MCF 10A (cell line): ENCODE measurements at regions of chr3 and their contacts with region 1.

Region 1: DNA sequence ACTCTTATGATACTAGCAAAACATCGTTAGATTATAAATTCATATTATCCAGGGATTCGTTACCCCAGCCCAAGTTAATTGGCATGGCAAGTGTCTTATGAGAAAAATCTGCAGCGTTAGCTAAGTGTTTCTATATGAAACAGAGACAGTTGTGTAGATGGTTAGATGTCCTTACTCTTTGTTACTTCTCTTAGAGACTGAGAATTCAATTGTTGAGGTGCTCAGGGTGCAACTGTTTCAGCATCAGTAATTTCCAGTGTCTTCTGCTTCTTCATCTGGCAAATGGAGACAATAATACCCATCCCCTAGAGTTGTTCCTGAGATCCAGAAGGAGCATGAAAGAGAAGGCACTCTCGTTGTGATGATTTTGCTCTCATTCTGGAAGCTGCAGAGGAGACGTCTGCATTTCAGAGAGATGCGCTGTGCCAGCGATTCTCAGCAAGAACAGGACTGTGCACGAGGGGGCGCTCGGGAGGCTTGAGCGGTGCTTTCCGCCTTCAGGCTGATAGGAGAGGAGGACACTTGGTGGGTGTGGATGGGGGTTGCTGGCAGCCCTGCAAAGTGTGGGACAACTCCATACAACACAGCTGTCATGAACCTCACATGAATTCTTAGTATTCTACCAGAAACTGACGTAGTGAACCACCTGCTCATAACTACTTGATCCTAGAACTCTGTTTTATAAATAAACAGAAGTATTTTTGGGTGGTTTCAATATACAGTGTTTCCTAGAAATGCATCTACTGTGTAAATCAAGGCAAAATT is 39.7 kb upstream of the SPSB4 start:
- DNase-seq: peak; percentile 66
- H3K4me3 Mint-ChIP-seq: no peak overlapping the region
- H3K27ac Mint-ChIP-seq: no peak overlapping the region
- H3K4me1 Mint-ChIP-seq: no peaks in the 10 kb centered on the region
- H3K27me3 Mint-ChIP-seq: peaks cover 11% of the 10 kb centered on the region
- CTCF ChIP-seq: peak; percentile 84

Region 2: GRCh38 chr3:140898340-140899180 is 112.9 kb before region 1 on chr3:
- CTCF ChIA-PET with region 1: interaction called, 11 read pairs
- POLR2A ChIA-PET with region 1: no interaction called
- intact Hi-C with region 1: no loop called
- DNase-seq: peak; percentile 83
- H3K4me3 Mint-ChIP-seq: no peak overlapping the region
- H3K27ac Mint-ChIP-seq: no peak overlapping the region
- H3K4me1 Mint-ChIP-seq: peaks cover 10% of the 10 kb centered on the region
- H3K27me3 Mint-ChIP-seq: peaks cover 30% of the 10 kb centered on the region
- CTCF ChIP-seq: peak; percentile 61

Region 3: GRCh38 chr3:141050576-141051442 is 39.4 kb after region 1 on chr3 and contains the start of gene SPSB4:
- CTCF ChIA-PET with region 1: interaction called, 14 read pairs
- POLR2A ChIA-PET with region 1: no interaction called
- intact Hi-C with region 1: no loop called
- DNase-seq: peak; percentile 56
- H3K4me3 Mint-ChIP-seq: peak within 1 kb of the TSS; percentile 57
- H3K27ac Mint-ChIP-seq: no peak within 1 kb of the TSS
- H3K4me1 Mint-ChIP-seq: peaks cover 11% of the 10 kb centered on the region
- H3K27me3 Mint-ChIP-seq: peaks cover 61% of the 10 kb centered on the region
- CTCF ChIP-seq: peak; percentile 16
- total RNA-seq, gene SPSB4: not detected in 2 replicates

Region 4: GRCh38 chr3:141094790-141095545 is 83.6 kb after region 1 on chr3:
- CTCF ChIA-PET with region 1: interaction called, 12 read pairs
- POLR2A ChIA-PET with region 1: interaction called, 3 read pairs
- intact Hi-C with region 1: no loop called
- DNase-seq: no peak
- H3K4me3 Mint-ChIP-seq: no peak overlapping the region
- H3K27ac Mint-ChIP-seq: no peak overlapping the region
- H3K4me1 Mint-ChIP-seq: peaks cover 9% of the 10 kb centered on the region
- H3K27me3 Mint-ChIP-seq: peaks cover 11% of the 10 kb centered on the region
- CTCF ChIP-seq: no peak

Region 5: GRCh38 chr3:141114816-141115460 is 103.5 kb after region 1 on chr3:
- CTCF ChIA-PET with region 1: interaction called, 10 read pairs
- POLR2A ChIA-PET with region 1: no interaction called
- intact Hi-C with region 1: no loop called
- DNase-seq: no peak
- H3K4me3 Mint-ChIP-seq: no peak overlapping the region
- H3K27ac Mint-ChIP-seq: no peak overlapping the region
- H3K4me1 Mint-ChIP-seq: no peaks in the 10 kb centered on the region
- H3K27me3 Mint-ChIP-seq: peaks cover 6% of the 10 kb centered on the region
- CTCF ChIP-seq: peak; percentile 26

Region 6: DNA sequence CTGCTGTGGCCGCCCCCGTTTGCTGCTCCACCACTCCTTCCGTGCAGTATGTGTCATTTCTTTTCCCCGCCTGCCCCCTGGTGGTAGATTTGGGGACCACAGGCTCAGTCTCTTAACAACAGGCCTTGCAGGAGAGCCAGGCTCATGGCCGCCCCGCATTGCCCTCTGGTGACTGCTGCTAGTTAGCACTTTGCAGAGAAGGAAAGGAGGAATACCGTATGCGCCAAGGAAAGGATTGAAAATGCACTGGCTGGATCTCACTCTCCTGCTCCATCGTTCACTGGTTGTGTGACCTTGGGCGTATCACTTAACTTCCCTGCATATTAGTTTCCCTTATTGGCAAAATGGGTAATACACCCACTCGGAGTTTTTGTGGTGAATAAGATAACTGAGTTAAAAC is 180.9 kb after region 1 on chr3:
- CTCF ChIA-PET with region 1: interaction called, 74 read pairs
- POLR2A ChIA-PET with region 1: no interaction called
- intact Hi-C with region 1: loop called (anchors 1 kb)
- DNase-seq: peak; percentile 96
- H3K4me3 Mint-ChIP-seq: no peak overlapping the region
- H3K27ac Mint-ChIP-seq: no peak overlapping the region
- H3K4me1 Mint-ChIP-seq: peaks cover 8% of the 10 kb centered on the region
- H3K27me3 Mint-ChIP-seq: peaks cover 28% of the 10 kb centered on the region
- CTCF ChIP-seq: peak; percentile 96